ENCODE measurements at regions of chr12 and their contacts with region 1.

Region 1: DNA sequence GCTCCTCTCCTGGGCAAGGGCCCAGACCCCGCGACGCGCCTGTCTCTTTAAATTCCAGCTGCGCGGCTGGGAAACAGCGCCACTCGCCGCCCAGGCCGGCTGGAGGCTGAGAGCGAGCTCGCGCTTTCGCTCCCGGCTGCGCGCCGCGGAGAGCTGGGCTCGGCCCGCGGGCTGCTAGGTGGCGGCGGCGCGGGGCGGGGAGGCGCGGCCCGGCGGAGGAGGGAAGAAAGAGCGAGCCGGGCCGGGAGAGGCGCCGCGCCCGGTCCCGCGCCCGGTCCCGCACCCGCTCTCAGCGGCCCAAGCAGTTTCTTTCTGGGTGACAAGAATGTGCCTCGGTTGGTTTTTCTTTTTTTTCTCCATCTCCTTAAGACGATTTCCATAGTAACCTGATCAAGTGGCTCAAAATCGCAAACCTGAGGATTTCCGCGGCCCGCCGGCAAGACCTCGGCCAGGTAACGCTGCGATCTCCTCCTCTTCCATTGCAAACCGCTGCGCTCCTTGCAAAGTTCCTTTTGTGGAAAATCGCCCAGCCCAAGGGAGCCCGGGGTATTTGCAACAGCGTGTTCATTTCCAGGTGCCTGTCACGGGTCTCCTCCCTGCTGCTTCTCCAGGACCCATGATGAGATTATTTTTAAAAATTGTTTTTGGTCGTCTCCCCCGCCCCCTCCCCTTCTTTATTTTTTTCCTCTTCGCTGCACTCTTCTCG is 259.5 kb upstream of the E2F7 start:
- DNase-seq: peak; percentile 62 to 80
- ATAC-seq: peak; percentile 94 to 99 (median 96)
- H3K4me3 ChIP-seq: peak overlapping the region; percentile 36 to 86 (median 75)
- H3K27ac ChIP-seq: peak overlapping the region in 5 of 10 donors; percentile 28 to 74 (median 55)
- H3K4me1 ChIP-seq: peaks cover 4 to 18% (median 7%) of the 10 kb centered on the region in 9 donors
- H3K27me3 ChIP-seq: peaks cover 0 to 28% (median 0%) of the 10 kb centered on the region in 7 donors
- CTCF ChIP-seq: peak in 8 of 9 donors; percentile 14 to 74 (median 46)

Region 2: DNA sequence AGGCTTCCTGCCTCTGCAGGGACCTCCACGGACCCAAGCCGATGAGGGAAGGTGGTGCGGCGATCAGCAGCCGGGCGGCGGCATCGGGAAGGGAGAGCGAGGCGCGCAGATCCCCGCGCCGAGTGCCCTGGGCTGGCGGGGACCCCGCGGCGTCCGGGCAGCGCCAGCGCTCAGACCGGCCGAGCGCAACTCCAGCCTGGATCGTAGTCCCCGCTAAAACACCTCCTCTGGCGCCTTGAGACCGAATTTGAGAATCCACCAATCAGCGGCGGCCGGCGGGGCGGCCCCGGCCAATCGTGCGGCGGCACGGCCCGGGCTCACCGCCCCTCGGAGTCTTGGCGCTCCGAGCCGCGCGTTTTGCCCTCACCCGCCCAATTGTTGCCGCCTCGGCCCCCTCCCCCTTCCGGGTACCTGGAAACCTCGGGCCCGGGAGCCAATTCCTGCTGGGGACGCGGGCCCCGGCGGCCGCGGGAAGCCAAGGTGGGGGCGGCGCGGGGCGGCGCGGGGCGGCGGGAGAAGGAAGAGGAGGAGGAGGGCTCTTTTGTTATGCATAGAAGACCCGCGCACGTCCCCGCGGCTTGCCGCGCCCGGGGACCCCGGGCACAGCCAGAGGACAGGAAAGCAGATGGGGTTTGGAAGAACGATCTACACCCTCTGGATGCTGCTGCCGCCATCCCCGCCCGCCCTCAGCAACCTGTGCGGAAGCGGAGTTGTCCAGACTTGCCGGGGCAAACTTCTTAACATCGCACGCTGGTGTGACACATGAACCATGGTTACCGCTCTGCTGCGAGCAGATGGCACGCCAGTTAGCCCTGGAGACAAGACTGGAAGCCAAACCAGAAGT is 259.3 kb before region 1 on chr12 and contains the start of gene E2F7:
- intact Hi-C with region 1: loop called in 2 of 10 experiments (anchors 10 kb)
- DNase-seq: peak; percentile 87 to 88
- ATAC-seq: peak; percentile 97 to 99 (median 97)
- H3K4me3 ChIP-seq: peak within 1 kb of the TSS; percentile 58 to 91 (median 78)
- H3K27ac ChIP-seq: peak within 1 kb of the TSS in 6 of 10 donors; percentile 13 to 54 (median 32)
- H3K4me1 ChIP-seq: peaks cover 0 to 46% (median 19%) of the 10 kb centered on the region in 9 donors
- H3K27me3 ChIP-seq: peaks cover 0 to 27% (median 7%) of the 10 kb centered on the region in 7 donors
- CTCF ChIP-seq: no peak
- total RNA-seq, gene E2F7: 0.05 to 1.5 (median 0.28) TPM in 9 of 10 donors, not detected in the other

Region 3: DNA sequence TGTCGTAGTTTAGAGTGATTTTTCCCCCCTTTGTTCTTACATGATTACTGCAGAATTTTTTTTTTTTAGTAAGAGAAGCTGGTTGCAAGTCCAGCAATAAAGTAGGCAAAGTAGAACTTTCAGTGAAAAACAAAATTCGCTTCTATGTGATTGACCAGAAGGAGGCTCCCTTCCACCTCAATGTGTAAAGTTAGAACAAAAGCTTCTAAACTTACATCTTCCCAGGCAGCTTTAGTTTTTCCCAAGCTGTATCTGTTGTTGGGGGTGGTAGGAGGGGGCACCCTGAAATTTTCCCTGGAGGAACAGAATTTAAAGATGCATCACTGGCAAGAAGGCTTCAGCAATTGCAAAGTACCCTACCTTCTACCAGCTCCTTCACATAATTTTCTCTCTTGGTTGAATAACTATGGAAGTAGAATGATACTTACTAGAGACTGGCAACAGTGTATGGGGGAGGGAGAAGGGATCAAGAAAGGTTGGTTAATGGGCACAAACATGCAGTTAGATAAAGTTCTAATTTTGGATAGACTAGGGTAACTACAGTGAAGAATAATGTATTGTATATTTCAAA is 172.2 kb before region 1 on chr12:
- intact Hi-C with region 1: loop called in 3 of 10 experiments (anchors 5 to 10 kb)
- DNase-seq: no peak
- ATAC-seq: peak in 2 of 8 donors; percentile 47 to 75
- H3K4me3 ChIP-seq: no peak overlapping the region
- H3K27ac ChIP-seq: no peak overlapping the region
- H3K4me1 ChIP-seq: no peaks in the 10 kb centered on the region
- H3K27me3 ChIP-seq: no peaks in the 10 kb centered on the region
- CTCF ChIP-seq: peak; percentile 27 to 73 (median 63)

Region 4: GRCh38 chr12:77344651-77345050 is 19.7 kb after region 1 on chr12:
- intact Hi-C with region 1: loop called in 1 of 10 experiments (anchors 2 kb)
- DNase-seq: no peak
- ATAC-seq: peak in 2 of 8 donors; percentile 51 to 56
- H3K4me3 ChIP-seq: no peak overlapping the region
- H3K27ac ChIP-seq: peak overlapping the region in 5 of 10 donors; percentile 21 to 72 (median 45)
- H3K4me1 ChIP-seq: peaks cover 0 to 51% (median 33%) of the 10 kb centered on the region in 9 donors
- H3K27me3 ChIP-seq: no peaks in the 10 kb centered on the region
- CTCF ChIP-seq: no peak

Region 5: GRCh38 chr12:77685112-77685511 is 360.2 kb after region 1 on chr12:
- intact Hi-C with region 1: loop called in 4 of 10 experiments (anchors 10 kb)
- DNase-seq: peak in 1 of 2 donors; percentile 69
- ATAC-seq: peak in 6 of 8 donors; percentile 64 to 88 (median 70)
- H3K4me3 ChIP-seq: peak overlapping the region in 5 of 10 donors; percentile 2 to 13 (median 11)
- H3K27ac ChIP-seq: no peak overlapping the region
- H3K4me1 ChIP-seq: peaks cover 0 to 6% (median 0%) of the 10 kb centered on the region in 9 donors
- H3K27me3 ChIP-seq: no peaks in the 10 kb centered on the region
- CTCF ChIP-seq: peak; percentile 41 to 76 (median 58)